ENCODE measurements at regions of chrX and their contacts with region 1.

Region 1: GRCh38 chrX:40552768-40553167 is 28.0 kb upstream of the ATP6AP2 start:
- DNase-seq: no peak
- ATAC-seq: no peak
- H3K4me3 ChIP-seq: no peak overlapping the region
- H3K27ac ChIP-seq: no peak overlapping the region
- H3K4me1 ChIP-seq: no peaks in the 10 kb centered on the region
- H3K27me3 ChIP-seq: peaks cover 0 to 31% (median 0%) of the 10 kb centered on the region in 9 donors
- CTCF ChIP-seq: peak in 5 of 12 donors; percentile 4 to 28 (median 21)
- POLR2A ChIP-seq: no peak

Region 2: DNA sequence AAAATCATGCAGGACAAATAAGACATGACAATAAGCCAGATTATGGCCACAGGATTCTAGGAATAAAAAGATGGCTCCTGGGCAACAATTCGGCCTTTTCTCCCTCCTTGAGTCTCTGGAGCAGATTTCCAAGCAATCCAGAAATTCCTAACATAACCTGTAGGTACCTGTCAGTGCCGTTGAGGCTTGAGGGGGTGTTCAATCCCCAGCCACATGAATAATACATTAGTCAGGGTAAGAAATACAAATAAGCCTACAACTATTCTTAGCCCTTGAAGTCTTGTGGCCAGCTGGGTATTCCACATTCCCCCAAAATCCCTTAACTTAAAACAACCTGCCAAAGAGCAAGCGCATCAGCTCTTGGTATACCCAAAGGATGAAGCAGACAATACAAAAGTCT is 84.9 kb after region 1 on chrX:
- intact Hi-C with region 1: loop called in 1 of 10 experiments (anchors 10 kb)
- DNase-seq: no peak
- ATAC-seq: no peak
- H3K4me3 ChIP-seq: no peak overlapping the region
- H3K27ac ChIP-seq: no peak overlapping the region
- H3K4me1 ChIP-seq: peaks cover 0 to 33% (median 0%) of the 10 kb centered on the region in 12 donors
- H3K27me3 ChIP-seq: peaks cover 0 to 27% (median 0%) of the 10 kb centered on the region in 9 donors
- CTCF ChIP-seq: no peak
- POLR2A ChIP-seq: no peak